GM10248 (cell line): ENCODE measurements at regions of chr11 and their contacts with region 1.

Region 1: GRCh38 chr11:73661035-73661628 is 14.8 kb downstream of the PLEKHB1 start:
- DNase-seq: peak; percentile 96
- CTCF ChIP-seq: peak; percentile 99

Region 2: DNA sequence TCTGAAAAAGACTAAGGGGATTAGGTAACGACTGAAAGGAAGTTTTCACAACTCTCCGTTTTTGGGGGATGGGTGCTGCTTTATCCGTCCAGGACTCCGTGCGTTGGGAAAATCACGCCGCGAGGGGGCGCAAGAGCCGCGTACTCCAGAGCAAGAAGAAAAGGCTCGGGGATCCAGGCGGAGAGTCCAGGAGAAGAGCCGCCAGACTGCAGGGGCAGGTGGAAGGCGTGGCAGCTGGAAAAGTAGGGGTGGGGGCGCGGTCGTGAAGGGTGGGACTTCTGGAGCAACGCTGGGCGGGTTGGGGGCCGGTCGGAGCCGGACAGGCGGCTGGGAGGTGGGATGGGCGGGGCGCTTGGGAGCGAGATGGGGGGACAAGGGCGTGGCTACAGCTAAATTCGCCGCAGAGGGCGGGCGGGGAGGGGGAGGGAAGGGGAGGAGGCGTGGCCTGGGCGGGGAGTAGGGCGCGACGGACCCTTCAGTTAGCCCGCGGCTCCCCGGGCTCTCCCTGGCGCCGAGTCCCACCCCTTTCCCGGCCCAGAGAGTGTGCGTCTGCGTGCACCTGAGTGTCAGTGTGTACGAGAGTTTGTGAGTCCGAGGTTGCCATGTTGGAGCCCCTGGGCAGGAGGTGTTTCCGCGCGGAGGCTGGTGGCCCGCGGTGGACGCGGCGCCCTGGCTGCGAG is 353.7 kb before region 1 on chr11:
- CTCF ChIA-PET with region 1: interaction called, 48 read pairs
- POLR2A ChIA-PET with region 1: no interaction called
- DNase-seq: peak; percentile 95
- CTCF ChIP-seq: peak; percentile 89

Region 3: GRCh38 chr11:73360336-73361013 is 300.7 kb before region 1 on chr11:
- CTCF ChIA-PET with region 1: interaction called, 16 read pairs
- POLR2A ChIA-PET with region 1: no interaction called
- DNase-seq: no peak
- CTCF ChIP-seq: peak; percentile 32

Region 4: DNA sequence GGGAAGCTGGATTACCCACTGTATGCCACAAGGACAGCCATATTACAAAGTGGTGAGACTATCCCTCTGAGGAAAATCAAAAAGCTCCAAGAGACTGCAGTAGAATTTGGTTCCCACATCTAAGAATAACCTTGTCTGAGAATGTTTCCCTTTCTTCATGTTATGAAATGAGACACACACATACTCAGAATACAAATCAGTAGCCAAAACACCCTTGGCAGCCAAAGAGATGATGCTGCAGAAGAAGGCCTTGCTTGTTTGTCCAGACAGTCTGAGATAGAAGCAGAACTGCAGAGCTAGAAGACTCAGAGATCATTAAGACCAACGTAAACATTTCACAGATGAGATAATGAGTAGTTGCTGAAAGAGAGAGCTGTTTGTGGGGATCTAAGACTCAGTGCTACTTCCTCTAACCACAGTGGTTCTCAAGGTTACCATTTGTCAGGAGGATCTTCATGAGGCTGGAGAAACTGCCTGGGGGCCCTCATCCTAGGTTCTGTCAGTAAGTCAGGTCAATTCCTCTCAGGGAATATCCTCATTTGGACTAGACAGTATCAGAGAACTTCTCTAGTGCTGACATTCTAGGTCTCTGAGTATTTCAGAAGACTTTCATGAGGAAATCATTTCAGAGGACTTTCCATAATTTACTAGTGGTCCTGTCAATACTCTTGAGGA is 246.0 kb before region 1 on chr11:
- CTCF ChIA-PET with region 1: interaction called, 13 read pairs
- POLR2A ChIA-PET with region 1: no interaction called
- DNase-seq: peak; percentile 36
- CTCF ChIP-seq: no peak

Region 5: DNA sequence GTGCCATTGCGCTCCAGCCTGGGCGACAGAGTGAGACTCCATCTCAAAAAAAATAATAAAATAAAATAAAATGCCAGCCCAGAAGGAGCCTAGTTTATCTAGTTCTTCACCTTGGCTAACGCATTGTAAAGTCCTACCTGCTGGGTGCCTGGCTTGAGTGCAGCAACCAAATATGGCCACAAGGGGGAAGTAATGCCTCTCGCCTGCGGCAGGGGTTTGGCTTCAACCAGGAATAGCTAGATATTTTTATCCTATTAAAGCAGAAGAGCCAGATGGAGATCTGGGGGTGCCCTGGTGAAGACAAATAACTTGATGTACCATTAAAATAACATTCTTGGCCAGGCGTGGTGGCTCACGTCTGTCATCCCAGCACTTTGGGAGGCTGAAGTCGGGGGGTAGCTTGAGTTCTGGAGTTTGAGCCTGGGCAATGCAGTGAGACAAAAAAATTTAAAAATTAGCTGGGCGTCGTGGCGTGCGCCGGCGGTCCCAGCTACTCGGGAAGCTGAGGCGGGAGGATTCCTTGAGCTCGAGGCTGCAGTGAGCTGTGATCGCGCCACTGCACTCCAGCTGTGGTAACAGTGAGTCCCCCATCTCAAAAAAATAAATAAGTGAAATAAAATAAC is 35.3 kb before region 1 on chr11:
- CTCF ChIA-PET with region 1: interaction called, 166 read pairs
- POLR2A ChIA-PET with region 1: no interaction called
- DNase-seq: peak; percentile 84
- CTCF ChIP-seq: peak; percentile 85

Region 6: GRCh38 chr11:73680687-73681086 is 19.6 kb after region 1 on chr11:
- CTCF ChIA-PET with region 1: interaction called, 18 read pairs
- POLR2A ChIA-PET with region 1: no interaction called
- DNase-seq: no peak
- CTCF ChIP-seq: no peak

Region 7: GRCh38 chr11:73710964-73711363 is 49.8 kb after region 1 on chr11:
- CTCF ChIA-PET with region 1: no interaction called
- POLR2A ChIA-PET with region 1: no interaction called
- DNase-seq: no peak
- CTCF ChIP-seq: no peak

Region 8: GRCh38 chr11:73866586-73866996 is 205.5 kb after region 1 on chr11:
- CTCF ChIA-PET with region 1: no interaction called
- POLR2A ChIA-PET with region 1: no interaction called
- DNase-seq: no peak
- CTCF ChIP-seq: no peak